ENCODE measurements at regions of chr4 and their contacts with region 1.

Region 1: DNA sequence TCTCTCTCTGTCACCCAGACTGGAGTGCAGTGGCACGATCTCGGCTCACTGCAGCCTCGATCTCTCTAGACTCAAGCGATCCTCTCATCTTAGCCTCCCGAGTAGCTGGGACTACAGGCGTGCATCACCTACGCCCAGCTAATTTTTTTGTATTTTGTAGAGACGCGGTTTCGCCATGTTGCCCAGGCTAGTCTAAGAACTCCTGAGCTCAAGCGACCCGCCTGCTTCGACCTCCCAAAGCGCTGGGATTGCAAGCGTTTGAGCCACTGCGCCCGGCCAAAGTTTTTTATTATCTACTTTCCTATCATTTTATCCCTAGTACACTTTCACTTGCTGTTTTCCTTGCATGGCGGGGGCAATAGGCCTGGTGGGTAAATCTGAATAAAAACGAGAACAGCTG is 1.3 kb downstream of the UBA6 start:
- DNase-seq: no peak
- H3K4me3 ChIP-seq: peak overlapping the region in 2 of 4 donors; percentile 100
- H3K27ac ChIP-seq: peak overlapping the region in 1 of 4 donors; percentile 98
- H3K4me1 ChIP-seq: peaks cover 0 to 27% (median 16%) of the 10 kb centered on the region in 4 donors
- H3K27me3 ChIP-seq: no peaks in the 10 kb centered on the region
- CTCF ChIP-seq: no peak
- EP300 ChIP-seq: no peak
- POLR2A ChIP-seq: no peak

Region 2: GRCh38 chr4:67545199-67546003 is 154.2 kb before region 1 on chr4 and contains the start of gene CENPC:
- in situ Hi-C with region 1: loop called in 1 of 4 experiments (anchors 10 kb)
- intact Hi-C with region 1: no loop called
- DNase-seq: peak; percentile 97
- H3K4me3 ChIP-seq: peak within 1 kb of the TSS; percentile 70 to 85 (median 82)
- H3K27ac ChIP-seq: peak within 1 kb of the TSS; percentile 93 to 97 (median 95)
- H3K4me1 ChIP-seq: peaks cover 6 to 33% (median 8%) of the 10 kb centered on the region in 4 donors
- H3K27me3 ChIP-seq: no peaks in the 10 kb centered on the region
- CTCF ChIP-seq: no peak
- EP300 ChIP-seq: no peak
- POLR2A ChIP-seq: peak; percentile 92
- total RNA-seq, gene CENPC: 16.1 to 39.5 (median 23.4) TPM

Region 3: GRCh38 chr4:67714248-67714583 is 14.6 kb after region 1 on chr4:
- in situ Hi-C with region 1: no loop called
- intact Hi-C with region 1: no loop called
- DNase-seq: no peak
- H3K4me3 ChIP-seq: no peak overlapping the region
- H3K27ac ChIP-seq: no peak overlapping the region
- H3K4me1 ChIP-seq: no peaks in the 10 kb centered on the region
- H3K27me3 ChIP-seq: no peaks in the 10 kb centered on the region
- CTCF ChIP-seq: no peak
- EP300 ChIP-seq: no peak
- POLR2A ChIP-seq: no peak